ENCODE measurements at regions of chr1 and their contacts with region 1.

Region 1: GRCh38 chr1:75991497-75992114 is 59.4 kb upstream of the ASB17 start:
- DNase-seq: peak; percentile 94
- H3K4me3 ChIP-seq: no peak overlapping the region
- H3K27ac ChIP-seq: no peak overlapping the region
- H3K4me1 ChIP-seq: no peaks in the 10 kb centered on the region
- H3K27me3 ChIP-seq: no peaks in the 10 kb centered on the region
- CTCF ChIP-seq: peak; percentile 71 to 81 (median 74)
- EP300 ChIP-seq: no peak
- POLR2A ChIP-seq: no peak

Region 2: GRCh38 chr1:74995821-74996220 is 995.8 kb before region 1 on chr1:
- intact Hi-C with region 1: no loop called
- DNase-seq: no peak
- H3K4me3 ChIP-seq: no peak overlapping the region
- H3K27ac ChIP-seq: no peak overlapping the region
- H3K4me1 ChIP-seq: no peaks in the 10 kb centered on the region
- H3K27me3 ChIP-seq: no peaks in the 10 kb centered on the region
- CTCF ChIP-seq: no peak
- EP300 ChIP-seq: no peak
- POLR2A ChIP-seq: no peak

Region 3: DNA sequence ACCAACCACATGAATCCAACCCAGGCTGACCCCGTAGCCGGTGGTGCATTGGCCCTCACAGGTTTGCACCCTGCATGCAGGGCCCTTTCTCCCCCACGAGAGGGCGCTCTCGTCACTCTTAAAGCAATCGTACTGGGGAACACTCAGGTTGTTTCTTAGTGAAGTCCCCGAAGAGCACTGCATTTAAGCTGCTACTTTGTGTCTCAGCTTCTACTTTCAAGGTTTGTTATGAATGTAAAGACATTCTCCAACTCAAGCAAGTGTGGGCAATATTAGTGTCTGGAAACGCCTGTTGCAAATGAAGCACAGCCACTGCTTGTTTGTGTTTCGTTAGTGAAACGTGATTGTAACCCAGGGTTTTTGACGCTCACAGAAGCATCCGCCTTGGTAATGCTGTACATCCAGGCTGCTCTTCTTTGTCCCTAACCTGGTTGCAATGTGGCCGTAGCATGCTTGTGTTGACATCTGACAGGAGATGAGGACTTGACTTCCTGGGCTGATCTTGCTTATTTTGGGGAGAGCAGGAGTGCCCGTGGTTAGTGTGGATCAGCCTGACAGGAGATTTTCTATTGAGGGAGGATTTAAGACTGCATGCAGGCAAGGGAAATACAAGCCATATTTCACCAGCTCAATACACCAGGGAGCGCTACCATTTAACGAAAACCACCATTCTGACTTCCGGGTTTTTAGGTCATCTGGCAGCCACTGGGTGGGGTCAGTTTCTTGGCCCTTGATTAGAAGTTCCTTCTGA is 162.8 kb after region 1 on chr1:
- intact Hi-C with region 1: loop called (anchors 5 kb)
- DNase-seq: peak; percentile 83
- H3K4me3 ChIP-seq: peak overlapping the region in 3 of 4 donors; percentile 28 to 36 (median 30)
- H3K27ac ChIP-seq: peak overlapping the region in 2 of 4 donors; percentile 4 to 37
- H3K4me1 ChIP-seq: peaks cover 0 to 14% (median 4%) of the 10 kb centered on the region in 4 donors
- H3K27me3 ChIP-seq: no peaks in the 10 kb centered on the region
- CTCF ChIP-seq: peak; percentile 29 to 94 (median 82)
- EP300 ChIP-seq: no peak
- POLR2A ChIP-seq: no peak

Region 4: GRCh38 chr1:76530953-76531352 is 539.3 kb after region 1 on chr1:
- intact Hi-C with region 1: no loop called
- DNase-seq: no peak
- H3K4me3 ChIP-seq: no peak overlapping the region
- H3K27ac ChIP-seq: no peak overlapping the region
- H3K4me1 ChIP-seq: no peaks in the 10 kb centered on the region
- H3K27me3 ChIP-seq: no peaks in the 10 kb centered on the region
- CTCF ChIP-seq: no peak
- EP300 ChIP-seq: no peak
- POLR2A ChIP-seq: no peak

Region 5: GRCh38 chr1:77143529-77144121 is 1152.0 kb after region 1 on chr1:
- intact Hi-C with region 1: loop called (anchors 5 kb)
- DNase-seq: no peak
- H3K4me3 ChIP-seq: no peak overlapping the region
- H3K27ac ChIP-seq: no peak overlapping the region
- H3K4me1 ChIP-seq: no peaks in the 10 kb centered on the region
- H3K27me3 ChIP-seq: no peaks in the 10 kb centered on the region
- CTCF ChIP-seq: peak in 1 of 4 experiments; percentile 10
- EP300 ChIP-seq: no peak
- POLR2A ChIP-seq: no peak